ENCODE measurements at regions of chr6 and their contacts with region 1.

Region 1: GRCh38 chr6:113122060-113122459 is 735.1 kb upstream of the MARCKS start:
- DNase-seq: peak; percentile 68
- H3K4me3 ChIP-seq: no peak overlapping the region
- H3K27me3 ChIP-seq: no peaks in the 10 kb centered on the region
- CTCF ChIP-seq: peak; percentile 54

Region 2: DNA sequence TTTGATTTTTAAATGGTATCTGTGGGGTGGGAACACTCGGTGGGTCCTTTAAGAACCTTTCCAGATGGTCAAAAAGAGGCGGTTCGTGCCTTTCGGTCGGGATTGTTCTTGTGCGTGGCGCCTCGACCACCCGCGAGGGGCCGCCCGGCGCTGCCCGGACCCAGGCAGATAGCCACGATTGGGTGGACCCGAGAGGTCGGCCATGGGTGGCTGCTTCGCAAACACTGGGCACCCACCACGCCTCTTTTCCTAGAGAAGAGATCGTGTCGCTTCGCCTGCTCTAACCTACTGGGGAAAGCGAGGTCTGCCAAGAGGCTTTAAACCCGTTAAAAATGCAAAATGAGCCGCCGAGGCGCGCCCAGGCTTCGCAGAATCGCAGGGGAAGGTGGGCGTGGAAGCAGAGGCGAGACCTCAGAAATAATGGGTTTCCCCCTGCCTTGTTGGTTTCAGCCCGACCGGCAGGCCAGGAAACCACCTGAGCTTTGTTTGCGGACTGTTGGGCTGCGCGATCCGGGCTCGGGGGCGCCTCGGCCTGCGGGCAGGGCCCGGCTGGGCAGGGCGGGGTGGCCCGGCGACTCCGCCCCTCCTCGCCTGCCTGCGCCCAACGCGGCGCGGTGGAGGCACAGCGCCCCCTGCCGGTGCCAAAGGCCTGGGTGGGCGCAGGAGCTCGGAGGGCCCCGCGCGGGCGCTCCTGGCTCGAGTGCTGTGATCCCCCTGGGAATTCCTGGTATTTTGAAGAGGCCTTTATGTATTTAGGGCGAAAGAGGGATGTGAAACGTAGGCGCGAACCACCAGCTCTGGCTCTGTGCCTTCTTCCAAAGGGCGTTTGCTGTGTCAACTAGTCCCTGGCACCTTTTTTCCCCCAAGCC is 736.7 kb after region 1 on chr6:
- CTCF ChIA-PET with region 1: interaction called, 10 read pairs
- POLR2A ChIA-PET with region 1: interaction called, 26 read pairs
- DNase-seq: no peak
- H3K4me3 ChIP-seq: peak overlapping the region; percentile 89
- H3K27me3 ChIP-seq: no peaks in the 10 kb centered on the region
- CTCF ChIP-seq: peak; percentile 69

Measured in BJ (cell line).